Mammary epithelial cell (primary cell): ENCODE measurements at regions of chr17 and their contacts with region 1.

Region 1: DNA sequence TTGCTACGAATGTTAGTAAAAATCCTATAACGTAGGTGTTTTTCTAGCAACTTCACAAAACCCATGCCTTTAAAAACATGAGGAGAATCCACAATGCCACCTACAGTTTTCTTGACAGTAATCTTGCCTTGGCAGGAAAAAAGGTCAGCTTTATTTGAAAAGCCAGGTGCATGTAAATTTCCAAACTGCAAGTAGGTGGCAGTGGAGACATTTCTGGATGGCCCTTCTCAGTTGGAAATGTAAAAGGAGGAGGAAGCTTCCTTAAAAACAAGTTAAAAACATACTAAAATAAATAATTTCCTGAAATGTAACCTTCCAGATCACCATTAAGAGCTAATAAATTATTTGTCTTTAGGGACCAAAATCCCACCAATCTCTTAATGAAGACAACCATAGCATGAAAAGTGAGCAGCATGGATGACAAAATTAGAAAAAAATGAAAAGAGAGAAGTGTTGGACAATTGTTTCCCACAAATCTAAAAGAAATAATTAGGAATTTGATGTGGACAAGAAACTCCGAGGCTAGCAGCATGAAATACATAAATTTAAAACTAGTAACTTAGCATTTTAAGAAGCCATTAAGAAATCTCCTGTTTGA is 152.2 kb downstream of the SNX11 start:
- DNase-seq: peak; percentile 30
- H3K4me3 ChIP-seq: no peak overlapping the region
- H3K27ac ChIP-seq: no peak overlapping the region
- H3K4me1 ChIP-seq: no peaks in the 10 kb centered on the region
- H3K27me3 ChIP-seq: no peaks in the 10 kb centered on the region
- CTCF ChIP-seq: peak; percentile 65 to 77

Region 2: GRCh38 chr17:48307814-48308411 is 48.1 kb after region 1 on chr17:
- CTCF ChIA-PET with region 1: no interaction called
- dilution Hi-C with region 1: no loop called
- in situ Hi-C with region 1: no loop called
- intact Hi-C with region 1: loop called (anchors 5 kb)
- DNase-seq: peak; percentile 37
- H3K4me3 ChIP-seq: no peak overlapping the region
- H3K27ac ChIP-seq: no peak overlapping the region
- H3K4me1 ChIP-seq: no peaks in the 10 kb centered on the region
- H3K27me3 ChIP-seq: peaks cover 20% of the 10 kb centered on the region
- CTCF ChIP-seq: peak; percentile 91 to 96

Region 3: GRCh38 chr17:48335858-48336500 is 76.2 kb after region 1 on chr17:
- CTCF ChIA-PET with region 1: interaction called, 11 read pairs
- dilution Hi-C with region 1: no loop called
- in situ Hi-C with region 1: no loop called
- intact Hi-C with region 1: no loop called
- DNase-seq: peak; percentile 53
- H3K4me3 ChIP-seq: no peak overlapping the region
- H3K27ac ChIP-seq: no peak overlapping the region
- H3K4me1 ChIP-seq: peaks cover 3% of the 10 kb centered on the region
- H3K27me3 ChIP-seq: peaks cover 13% of the 10 kb centered on the region
- CTCF ChIP-seq: peak; percentile 69 to 71

Region 4: GRCh38 chr17:48738803-48739526 is 479.2 kb after region 1 on chr17:
- CTCF ChIA-PET with region 1: interaction called, 18 read pairs
- dilution Hi-C with region 1: no loop called
- in situ Hi-C with region 1: no loop called
- intact Hi-C with region 1: no loop called
- DNase-seq: no peak
- H3K4me3 ChIP-seq: no peak overlapping the region
- H3K27ac ChIP-seq: no peak overlapping the region
- H3K4me1 ChIP-seq: no peaks in the 10 kb centered on the region
- H3K27me3 ChIP-seq: peaks cover 51% of the 10 kb centered on the region
- CTCF ChIP-seq: no peak